GM12878 (cell line): ENCODE measurements at regions of chr2 and their contacts with region 1.

Region 1: GRCh38 chr2:134154246-134154645 is 99.6 kb upstream of the MGAT5 start:
- DNase-seq: peak; percentile 36
- ATAC-seq: peak; percentile 86
- H3K4me3 ChIP-seq: no peak overlapping the region
- H3K27ac ChIP-seq: peak overlapping the region; percentile 34
- H3K4me1 ChIP-seq: peaks cover 35% of the 10 kb centered on the region
- H3K27me3 ChIP-seq: no peaks in the 10 kb centered on the region
- CTCF ChIP-seq: no peak
- EP300 ChIP-seq: no peak
- POLR2A ChIP-seq: no peak; the same call in 1 of the 2 replicates
- RAD21 ChIP-seq: no peak

Region 2: GRCh38 chr2:134167019-134167600 is 12.9 kb after region 1 on chr2:
- CTCF ChIA-PET with region 1: interaction called, 8 read pairs
- POLR2A ChIA-PET with region 1: no interaction called
- RAD21 ChIA-PET with region 1: no interaction called
- SMC1A ChIA-PET with region 1: interaction called, 20 read pairs
- in situ Hi-C with region 1: no loop called
- intact Hi-C with region 1: no loop called
- DNase-seq: no peak
- ATAC-seq: peak; percentile 37
- H3K4me3 ChIP-seq: no peak overlapping the region
- H3K27ac ChIP-seq: no peak overlapping the region
- H3K4me1 ChIP-seq: peaks cover 28% of the 10 kb centered on the region
- H3K27me3 ChIP-seq: no peaks in the 10 kb centered on the region
- CTCF ChIP-seq: no peak
- EP300 ChIP-seq: no peak
- POLR2A ChIP-seq: no peak
- RAD21 ChIP-seq: no peak